Posterior cingulate gyrus (tissue), 11 donors: ENCODE measurements at regions of chr15 and their contacts with region 1.

Region 1: GRCh38 chr15:60179786-60180391 is 175.8 kb downstream of the FOXB1 start:
- DNase-seq: peak in 1 of 10 donors; percentile 12

Region 2: DNA sequence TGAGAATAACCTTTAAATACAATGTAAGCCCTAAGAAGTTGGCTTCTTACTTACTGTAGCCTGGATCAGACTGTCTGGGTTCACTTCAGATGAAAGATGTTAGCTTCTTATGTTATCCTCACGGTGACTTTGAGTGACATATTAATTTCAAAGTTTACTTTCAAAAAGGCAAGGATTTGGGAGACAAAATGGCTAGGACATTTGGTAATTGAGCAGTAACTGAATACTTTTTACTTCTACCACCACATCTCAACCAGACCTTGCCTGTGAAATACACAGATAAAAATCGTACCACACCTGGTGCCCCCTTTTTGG is 454.8 kb before region 1 on chr15:
- intact Hi-C with region 1: loop called (anchors 10 kb)
- DNase-seq: no peak